Natural killer cell (primary cell): ENCODE measurements at regions of chr5 and their contacts with region 1.

Region 1: DNA sequence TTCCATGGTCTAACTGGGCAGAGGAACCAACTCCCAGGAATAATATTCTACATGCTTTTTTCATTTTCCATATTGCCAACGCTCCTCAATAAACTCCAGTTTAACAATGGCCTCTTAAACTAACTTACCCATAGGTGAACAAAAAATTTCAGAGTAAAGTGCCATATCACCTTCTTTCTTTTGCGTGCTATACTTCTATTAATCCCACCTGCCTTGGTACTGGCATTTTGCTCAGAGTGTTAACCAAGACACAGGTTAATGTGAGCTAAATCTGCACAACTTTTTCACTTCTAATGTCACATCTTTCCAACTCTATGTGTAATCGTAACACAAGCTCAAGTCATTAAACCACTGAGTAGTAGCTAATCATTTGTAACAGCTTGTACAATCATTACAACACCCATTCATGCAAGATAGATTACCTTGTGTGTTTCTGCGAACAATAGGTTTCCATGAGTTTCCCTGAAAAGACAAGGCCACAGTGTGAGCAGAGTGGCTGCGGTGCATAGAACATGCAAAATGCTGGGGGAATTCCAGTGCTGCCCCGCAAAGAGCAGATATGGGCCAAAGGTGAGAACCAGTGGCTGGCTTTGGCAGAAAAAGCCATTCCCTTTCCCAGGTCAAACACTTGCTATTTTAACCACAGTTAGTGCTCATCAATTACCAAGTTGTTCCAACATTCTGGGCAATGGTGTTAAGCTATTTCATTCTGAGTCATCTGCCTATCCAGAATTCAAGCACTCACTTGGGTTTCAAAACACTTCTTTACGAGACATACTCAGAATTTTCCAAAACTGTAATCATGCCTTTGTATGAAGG is 42.8 kb downstream of the TIMD4 start:
- DNase-seq: peak; percentile 51 to 60
- ATAC-seq: peak; percentile 70 to 88 (median 77)
- H3K4me3 ChIP-seq: no peak overlapping the region
- H3K4me3 Mint-ChIP-seq: no peak overlapping the region
- H3K27ac ChIP-seq: peak overlapping the region; percentile 44
- H3K27ac Mint-ChIP-seq: peak overlapping the region; percentile 79 to 82
- H3K4me1 ChIP-seq: peaks cover 22% of the 10 kb centered on the region
- H3K4me1 Mint-ChIP-seq: peaks cover 67 to 73% of the 10 kb centered on the region in 2 donors
- H3K27me3 ChIP-seq: no peaks in the 10 kb centered on the region
- H3K27me3 Mint-ChIP-seq: no peaks in the 10 kb centered on the region
- CTCF ChIP-seq: no peak

Region 2: GRCh38 chr5:155616779-155617392 is 1303.4 kb before region 1 on chr5:
- intact Hi-C with region 1: loop called (anchors 10 kb)
- DNase-seq: peak; percentile 40 to 59
- ATAC-seq: peak; percentile 55 to 64 (median 57)
- H3K4me3 ChIP-seq: no peak overlapping the region
- H3K4me3 Mint-ChIP-seq: no peak overlapping the region
- H3K27ac ChIP-seq: no peak overlapping the region
- H3K27ac Mint-ChIP-seq: no peak overlapping the region
- H3K4me1 ChIP-seq: no peaks in the 10 kb centered on the region
- H3K4me1 Mint-ChIP-seq: no peaks in the 10 kb centered on the region
- H3K27me3 ChIP-seq: no peaks in the 10 kb centered on the region
- H3K27me3 Mint-ChIP-seq: peaks cover 0 to 15% of the 10 kb centered on the region in 2 donors
- CTCF ChIP-seq: peak; percentile 64

Region 3: DNA sequence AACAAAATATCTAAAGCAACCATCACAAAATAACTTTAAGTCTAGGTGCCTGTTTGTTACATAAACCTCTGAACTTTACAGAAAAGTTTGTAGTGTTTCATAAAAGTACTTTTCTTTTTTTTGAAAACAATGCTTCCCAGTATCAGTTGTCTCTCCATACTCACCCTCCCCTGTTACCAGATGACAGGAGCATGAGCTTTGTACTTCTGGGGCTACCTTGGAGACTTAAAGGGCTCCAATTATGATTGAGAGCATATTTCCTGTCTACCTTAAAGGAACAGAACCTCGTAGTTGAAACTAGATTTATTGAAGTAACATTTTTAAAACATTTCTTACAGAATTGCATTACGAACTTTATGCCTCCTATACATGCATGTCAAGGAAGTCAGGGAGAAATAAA is 125.6 kb before region 1 on chr5:
- intact Hi-C with region 1: no loop called
- DNase-seq: no peak
- ATAC-seq: no peak
- H3K4me3 ChIP-seq: no peak overlapping the region
- H3K4me3 Mint-ChIP-seq: no peak overlapping the region
- H3K27ac ChIP-seq: no peak overlapping the region
- H3K27ac Mint-ChIP-seq: no peak overlapping the region
- H3K4me1 ChIP-seq: no peaks in the 10 kb centered on the region
- H3K4me1 Mint-ChIP-seq: peaks cover 5% of the 10 kb centered on the region in 2 donors
- H3K27me3 ChIP-seq: no peaks in the 10 kb centered on the region
- H3K27me3 Mint-ChIP-seq: peaks cover 7 to 30% of the 10 kb centered on the region in 2 donors
- CTCF ChIP-seq: no peak

Region 4: DNA sequence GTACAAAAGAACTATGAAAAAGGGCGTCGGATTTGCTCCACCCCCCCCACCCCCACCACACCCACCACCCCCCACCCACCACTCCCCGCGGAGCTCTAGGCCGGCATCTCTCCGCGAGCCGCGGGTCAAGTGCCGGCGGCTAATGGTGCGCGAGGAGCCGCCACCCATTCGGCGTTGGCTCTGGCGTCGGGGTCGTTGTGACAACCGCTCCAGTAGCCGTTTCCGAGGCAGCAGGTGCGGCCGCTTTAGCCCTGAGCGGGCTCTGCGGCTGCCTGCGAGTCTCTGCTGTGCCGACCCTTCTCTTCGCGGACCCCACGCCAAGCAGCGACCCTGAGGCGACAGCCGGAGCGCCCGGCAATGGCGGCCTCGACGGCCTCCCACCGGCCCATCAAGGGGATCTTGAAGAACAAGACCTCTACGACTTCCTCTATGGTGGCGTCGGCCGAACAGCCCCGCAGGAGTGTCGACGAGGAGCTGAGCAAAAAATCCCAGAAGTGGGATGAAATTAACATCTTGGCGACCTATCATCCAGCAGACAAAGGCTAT is 70.0 kb before region 1 on chr5 and contains the start of gene PPP1R2B:
- intact Hi-C with region 1: no loop called
- DNase-seq: no peak
- ATAC-seq: no peak
- H3K4me3 ChIP-seq: no peak within 1 kb of the TSS
- H3K4me3 Mint-ChIP-seq: no peak within 1 kb of the TSS
- H3K27ac ChIP-seq: no peak within 1 kb of the TSS
- H3K27ac Mint-ChIP-seq: no peak within 1 kb of the TSS
- H3K4me1 ChIP-seq: no peaks in the 10 kb centered on the region
- H3K4me1 Mint-ChIP-seq: no peaks in the 10 kb centered on the region
- H3K27me3 ChIP-seq: peaks cover 14% of the 10 kb centered on the region
- H3K27me3 Mint-ChIP-seq: peaks cover 24 to 62% of the 10 kb centered on the region in 2 donors
- CTCF ChIP-seq: no peak
- total RNA-seq, gene PPP1R2B: 0.20 to 0.39 (median 0.26) TPM

Region 5: GRCh38 chr5:157108976-157109375 is 188.7 kb after region 1 on chr5 and contains the start of gene HAVCR2:
- intact Hi-C with region 1: loop called (anchors 5 kb)
- DNase-seq: peak; percentile 62 to 66
- ATAC-seq: peak; percentile 80 to 95 (median 90)
- H3K4me3 ChIP-seq: peak within 1 kb of the TSS; percentile 52
- H3K4me3 Mint-ChIP-seq: peak within 1 kb of the TSS; percentile 94
- H3K27ac ChIP-seq: peak within 1 kb of the TSS; percentile 73
- H3K27ac Mint-ChIP-seq: peak within 1 kb of the TSS; percentile 95 to 97
- H3K4me1 ChIP-seq: peaks cover 46% of the 10 kb centered on the region
- H3K4me1 Mint-ChIP-seq: peaks cover 58% of the 10 kb centered on the region in 2 donors
- H3K27me3 ChIP-seq: no peaks in the 10 kb centered on the region
- H3K27me3 Mint-ChIP-seq: no peaks in the 10 kb centered on the region
- CTCF ChIP-seq: no peak
- total RNA-seq, gene HAVCR2: 60.0 to 92.2 (median 74.3) TPM